ENCODE measurements at regions of chr3 and their contacts with region 1.

Region 1: GRCh38 chr3:111592936-111593335 is 2.2 kb downstream of the ZBED2 start:
- DNase-seq: no peak
- ATAC-seq: no peak
- H3K4me3 ChIP-seq: no peak overlapping the region
- H3K4me3 Mint-ChIP-seq: no peak overlapping the region
- H3K27ac ChIP-seq: no peak overlapping the region
- H3K27ac Mint-ChIP-seq: peak overlapping the region in 1 of 2 donors; percentile 69
- H3K4me1 ChIP-seq: peaks cover 6% of the 10 kb centered on the region
- H3K4me1 Mint-ChIP-seq: peaks cover 16 to 22% of the 10 kb centered on the region in 2 donors
- H3K27me3 ChIP-seq: no peaks in the 10 kb centered on the region
- H3K27me3 Mint-ChIP-seq: no peaks in the 10 kb centered on the region
- CTCF ChIP-seq: no peak

Region 2: GRCh38 chr3:111539351-111540331 is 53.3 kb before region 1 on chr3:
- intact Hi-C with region 1: no loop called
- DNase-seq: peak; percentile 45 to 84
- ATAC-seq: peak; percentile 46 to 59 (median 50)
- H3K4me3 ChIP-seq: peak overlapping the region; percentile 17
- H3K4me3 Mint-ChIP-seq: peak overlapping the region; percentile 83
- H3K27ac ChIP-seq: peak overlapping the region; percentile 34
- H3K27ac Mint-ChIP-seq: peak overlapping the region in 1 of 2 donors; percentile 70
- H3K4me1 ChIP-seq: peaks cover 26% of the 10 kb centered on the region
- H3K4me1 Mint-ChIP-seq: peaks cover 22 to 26% of the 10 kb centered on the region in 2 donors
- H3K27me3 ChIP-seq: no peaks in the 10 kb centered on the region
- H3K27me3 Mint-ChIP-seq: peaks cover 0 to 3% of the 10 kb centered on the region in 2 donors
- CTCF ChIP-seq: peak; percentile 80

Region 3: DNA sequence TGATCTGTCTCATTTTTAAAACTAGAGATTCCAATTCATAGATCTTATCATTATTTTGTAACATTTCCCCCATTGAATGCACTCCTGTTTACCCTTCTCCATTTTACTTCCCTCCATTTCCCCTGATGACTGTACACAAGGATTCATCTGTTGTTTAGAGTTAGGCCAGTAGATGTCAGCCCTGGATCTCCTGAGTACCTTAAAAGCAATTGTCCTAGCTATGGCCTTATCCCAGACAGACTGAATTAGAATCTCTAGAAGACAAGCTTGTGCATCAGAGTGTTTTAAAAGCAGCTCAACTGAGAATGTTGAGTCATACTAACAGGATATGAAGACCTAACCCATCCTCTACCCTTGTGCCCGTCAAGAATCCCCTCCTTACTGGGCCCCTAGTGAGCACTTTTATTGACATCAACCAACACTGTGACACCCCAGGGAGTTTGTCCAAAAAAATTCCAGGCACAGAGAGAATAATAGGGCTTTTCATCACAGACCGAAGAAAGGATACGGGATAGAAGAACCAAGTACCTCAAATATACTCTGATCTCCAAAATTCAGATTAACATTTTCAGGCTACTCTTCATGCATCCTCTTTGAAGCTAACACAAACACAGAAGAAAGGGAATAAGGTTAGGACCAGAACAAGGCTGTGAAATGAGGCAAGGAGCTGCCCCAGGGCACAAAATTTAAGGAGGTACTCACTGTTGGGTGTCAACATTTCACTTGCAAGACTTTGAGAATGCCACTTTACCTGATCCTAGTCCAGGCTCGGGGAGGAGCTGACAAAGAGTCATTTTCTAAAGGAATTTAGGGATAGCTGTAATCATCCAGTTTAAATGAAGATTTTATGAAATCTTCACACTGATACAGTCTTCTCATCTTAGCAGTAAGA is 14.9 kb before region 1 on chr3:
- intact Hi-C with region 1: loop called (anchors 1 kb)
- DNase-seq: peak in 1 of 2 donors; percentile 64
- ATAC-seq: peak; percentile 72 to 88 (median 83)
- H3K4me3 ChIP-seq: no peak overlapping the region
- H3K4me3 Mint-ChIP-seq: no peak overlapping the region
- H3K27ac ChIP-seq: no peak overlapping the region
- H3K27ac Mint-ChIP-seq: peak overlapping the region; percentile 69 to 78
- H3K4me1 ChIP-seq: peaks cover 7% of the 10 kb centered on the region
- H3K4me1 Mint-ChIP-seq: peaks cover 46 to 48% of the 10 kb centered on the region in 2 donors
- H3K27me3 ChIP-seq: no peaks in the 10 kb centered on the region
- H3K27me3 Mint-ChIP-seq: no peaks in the 10 kb centered on the region
- CTCF ChIP-seq: peak; percentile 19

Region 4: GRCh38 chr3:111604119-111604518 is 11.2 kb after region 1 on chr3:
- intact Hi-C with region 1: no loop called
- DNase-seq: no peak
- ATAC-seq: no peak
- H3K4me3 ChIP-seq: no peak overlapping the region
- H3K4me3 Mint-ChIP-seq: no peak overlapping the region
- H3K27ac ChIP-seq: no peak overlapping the region
- H3K27ac Mint-ChIP-seq: peak overlapping the region in 1 of 2 donors; percentile 9
- H3K4me1 ChIP-seq: peaks cover 7% of the 10 kb centered on the region
- H3K4me1 Mint-ChIP-seq: peaks cover 23% of the 10 kb centered on the region in 2 donors
- H3K27me3 ChIP-seq: no peaks in the 10 kb centered on the region
- H3K27me3 Mint-ChIP-seq: no peaks in the 10 kb centered on the region
- CTCF ChIP-seq: no peak

Region 5: GRCh38 chr3:111700054-111700453 is 107.1 kb after region 1 on chr3:
- intact Hi-C with region 1: no loop called
- DNase-seq: no peak
- ATAC-seq: no peak
- H3K4me3 ChIP-seq: no peak overlapping the region
- H3K4me3 Mint-ChIP-seq: no peak overlapping the region
- H3K27ac ChIP-seq: no peak overlapping the region
- H3K27ac Mint-ChIP-seq: peak overlapping the region; percentile 63 to 73
- H3K4me1 ChIP-seq: peaks cover 10% of the 10 kb centered on the region
- H3K4me1 Mint-ChIP-seq: peaks cover 21 to 56% of the 10 kb centered on the region in 2 donors
- H3K27me3 ChIP-seq: no peaks in the 10 kb centered on the region
- H3K27me3 Mint-ChIP-seq: no peaks in the 10 kb centered on the region
- CTCF ChIP-seq: no peak

Measured in natural killer cell (primary cell).